Heart right ventricle (tissue), 16 donors: ENCODE measurements at regions of chr14 and their contacts with region 1.

Region 1: GRCh38 chr14:55094321-55095157 is 34.5 kb upstream of the LGALS3 start:
- DNase-seq: no peak
- ATAC-seq: no peak
- H3K4me3 ChIP-seq: no peak overlapping the region
- H3K27ac ChIP-seq: no peak overlapping the region
- H3K4me1 ChIP-seq: peaks cover 0 to 43% (median 23%) of the 10 kb centered on the region in 9 donors
- H3K27me3 ChIP-seq: no peaks in the 10 kb centered on the region
- CTCF ChIP-seq: no peak

Region 2: GRCh38 chr14:55142466-55142865 is 47.9 kb after region 1 on chr14:
- intact Hi-C with region 1: loop called in 1 of 10 experiments (anchors 5 kb)
- DNase-seq: no peak
- ATAC-seq: no peak
- H3K4me3 ChIP-seq: no peak overlapping the region
- H3K27ac ChIP-seq: no peak overlapping the region
- H3K4me1 ChIP-seq: peaks cover 3 to 33% (median 14%) of the 10 kb centered on the region in 9 donors
- H3K27me3 ChIP-seq: no peaks in the 10 kb centered on the region
- CTCF ChIP-seq: no peak